ENCODE measurements at regions of chr16 and their contacts with region 1.

Region 1: DNA sequence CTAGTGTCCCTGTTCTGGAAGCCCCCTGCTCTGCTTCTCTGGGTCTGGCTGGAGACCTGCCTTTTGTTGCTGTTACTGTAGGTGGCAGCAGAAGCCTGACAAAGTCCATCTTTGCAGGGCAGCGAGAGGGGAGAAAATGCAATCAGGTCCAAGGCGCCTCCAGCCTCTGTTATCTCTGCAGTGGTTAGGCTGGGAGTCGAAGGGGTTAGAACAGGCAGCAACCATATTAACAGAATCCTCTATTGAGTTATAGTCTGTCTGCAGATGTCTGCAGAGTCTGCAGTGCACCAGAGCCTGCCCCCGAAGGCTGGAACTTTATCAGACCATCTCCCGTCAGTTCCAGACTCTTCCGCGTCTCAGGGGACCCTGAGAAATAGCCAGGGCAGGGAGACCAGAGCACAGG is 404.9 kb upstream of the EEF2KMT start:
- DNase-seq: no peak
- ATAC-seq: no peak
- H3K4me3 ChIP-seq: no peak overlapping the region
- H3K27ac ChIP-seq: no peak overlapping the region
- H3K4me1 ChIP-seq: no peaks in the 10 kb centered on the region
- H3K27me3 ChIP-seq: peaks cover 0 to 18% (median 0%) of the 10 kb centered on the region in 7 donors
- CTCF ChIP-seq: peak in 6 of 9 donors; percentile 20 to 45 (median 29)

Region 2: GRCh38 chr16:5056352-5056751 is 446.1 kb before region 1 on chr16:
- intact Hi-C with region 1: no loop called
- DNase-seq: no peak
- ATAC-seq: no peak
- H3K4me3 ChIP-seq: no peak overlapping the region
- H3K27ac ChIP-seq: no peak overlapping the region
- H3K4me1 ChIP-seq: peaks cover 0 to 10% (median 0%) of the 10 kb centered on the region in 9 donors
- H3K27me3 ChIP-seq: no peaks in the 10 kb centered on the region
- CTCF ChIP-seq: peak in 6 of 9 donors; percentile 8 to 47 (median 28)

Region 3: DNA sequence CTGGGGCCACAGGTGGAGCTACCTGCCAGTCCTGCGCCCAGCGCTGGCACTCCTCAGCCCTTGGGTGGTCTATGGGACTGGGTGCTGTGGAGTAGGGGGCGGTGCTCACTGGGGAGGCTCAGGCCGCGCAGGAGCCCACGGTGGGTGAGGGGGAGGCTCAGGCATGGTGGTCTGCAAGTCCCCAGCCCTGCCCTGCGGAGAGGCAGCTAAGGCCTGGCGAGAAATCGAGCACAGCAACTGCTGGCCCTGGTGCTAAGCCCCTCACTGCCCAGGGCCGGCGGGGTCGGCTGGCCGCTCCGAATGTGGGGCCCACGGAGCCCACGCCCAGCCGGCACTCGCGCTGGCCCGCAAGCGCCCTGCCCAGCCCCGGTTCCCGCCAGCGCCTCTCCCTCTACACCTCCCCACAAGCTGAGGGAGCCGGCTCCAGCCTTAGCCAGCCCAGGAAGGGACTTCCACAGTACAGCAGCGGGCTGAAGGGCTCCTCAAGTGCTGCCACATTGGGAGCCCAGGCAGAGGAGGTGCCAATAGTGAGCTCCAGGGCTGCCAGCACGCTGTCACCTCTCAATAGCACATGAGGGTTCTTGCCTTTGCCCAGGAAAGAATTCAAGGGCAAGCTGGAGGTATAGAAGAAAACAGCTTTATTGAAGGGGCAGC is 393.8 kb before region 1 on chr16:
- intact Hi-C with region 1: no loop called
- DNase-seq: peak in 1 of 2 donors; percentile 61
- ATAC-seq: peak in 2 of 8 donors; percentile 72 to 74
- H3K4me3 ChIP-seq: no peak overlapping the region
- H3K27ac ChIP-seq: no peak overlapping the region
- H3K4me1 ChIP-seq: no peaks in the 10 kb centered on the region
- H3K27me3 ChIP-seq: no peaks in the 10 kb centered on the region
- CTCF ChIP-seq: no peak

Region 4: DNA sequence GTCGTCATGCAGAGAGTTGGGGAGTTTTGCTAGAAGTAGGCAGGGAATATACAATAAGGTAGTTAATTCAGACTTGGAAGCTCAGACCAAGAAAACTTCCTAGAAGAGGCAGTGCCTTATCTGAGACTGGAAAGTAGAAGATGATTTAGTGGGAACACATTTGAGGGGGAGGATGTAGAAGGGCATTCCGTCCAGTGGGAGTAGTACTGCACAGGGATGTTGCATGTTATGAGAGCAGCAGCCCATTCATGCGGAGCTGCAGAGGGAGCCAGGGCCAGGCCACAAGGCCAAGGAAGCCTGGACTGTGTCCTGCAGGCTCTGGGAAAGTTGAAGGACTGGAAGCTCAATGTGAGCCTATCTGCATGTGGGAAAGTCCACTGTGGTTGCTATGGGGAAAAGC is 60.4 kb before region 1 on chr16:
- intact Hi-C with region 1: loop called in 1 of 10 experiments (anchors 10 kb)
- DNase-seq: no peak
- ATAC-seq: no peak
- H3K4me3 ChIP-seq: no peak overlapping the region
- H3K27ac ChIP-seq: no peak overlapping the region
- H3K4me1 ChIP-seq: no peaks in the 10 kb centered on the region
- H3K27me3 ChIP-seq: no peaks in the 10 kb centered on the region
- CTCF ChIP-seq: no peak